ENCODE measurements at regions of chr12 and their contacts with region 1.

Region 1: GRCh38 chr12:63843721-63844390 is 644 bp upstream of the SRGAP1 start:
- DNase-seq: peak; percentile 74 to 81
- ATAC-seq: peak; percentile 88 to 90
- H3K4me3 ChIP-seq: peak overlapping the region; percentile 73 to 91 (median 84)
- H3K27ac ChIP-seq: peak overlapping the region; percentile 79 to 85 (median 83)
- H3K4me1 ChIP-seq: peaks cover 4 to 7% of the 10 kb centered on the region in 2 donors
- H3K27me3 ChIP-seq: no peaks in the 10 kb centered on the region
- CTCF ChIP-seq: peak; percentile 83 to 91 (median 88)
- POLR2A ChIP-seq: peak in 1 of 2 donors; percentile 55

Region 2: DNA sequence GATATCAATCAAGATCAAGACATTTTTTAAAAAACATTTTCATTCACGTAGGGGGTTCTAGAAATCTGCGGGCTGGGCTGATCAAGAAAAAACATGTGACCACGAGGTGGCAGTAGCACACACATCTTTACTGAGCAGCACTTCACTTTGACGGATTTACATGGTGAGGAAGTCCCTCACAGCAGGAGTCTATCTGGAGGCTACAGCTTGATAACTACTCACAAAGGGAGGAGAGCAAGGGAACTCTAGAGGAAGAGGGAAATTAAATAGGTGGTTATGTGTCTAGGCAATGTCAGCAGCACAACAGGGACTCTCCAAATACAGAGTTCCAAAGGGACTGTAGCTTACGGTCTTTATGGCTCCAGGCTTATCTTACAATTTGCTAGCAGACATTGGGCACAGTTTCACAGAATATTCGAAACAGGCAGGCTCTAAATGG is 423.6 kb before region 1 on chr12:
- in situ Hi-C with region 1: no loop called
- intact Hi-C with region 1: no loop called
- DNase-seq: no peak
- ATAC-seq: no peak
- H3K4me3 ChIP-seq: no peak overlapping the region
- H3K27ac ChIP-seq: no peak overlapping the region
- H3K4me1 ChIP-seq: no peaks in the 10 kb centered on the region
- H3K27me3 ChIP-seq: no peaks in the 10 kb centered on the region
- CTCF ChIP-seq: no peak
- POLR2A ChIP-seq: no peak

Region 3: DNA sequence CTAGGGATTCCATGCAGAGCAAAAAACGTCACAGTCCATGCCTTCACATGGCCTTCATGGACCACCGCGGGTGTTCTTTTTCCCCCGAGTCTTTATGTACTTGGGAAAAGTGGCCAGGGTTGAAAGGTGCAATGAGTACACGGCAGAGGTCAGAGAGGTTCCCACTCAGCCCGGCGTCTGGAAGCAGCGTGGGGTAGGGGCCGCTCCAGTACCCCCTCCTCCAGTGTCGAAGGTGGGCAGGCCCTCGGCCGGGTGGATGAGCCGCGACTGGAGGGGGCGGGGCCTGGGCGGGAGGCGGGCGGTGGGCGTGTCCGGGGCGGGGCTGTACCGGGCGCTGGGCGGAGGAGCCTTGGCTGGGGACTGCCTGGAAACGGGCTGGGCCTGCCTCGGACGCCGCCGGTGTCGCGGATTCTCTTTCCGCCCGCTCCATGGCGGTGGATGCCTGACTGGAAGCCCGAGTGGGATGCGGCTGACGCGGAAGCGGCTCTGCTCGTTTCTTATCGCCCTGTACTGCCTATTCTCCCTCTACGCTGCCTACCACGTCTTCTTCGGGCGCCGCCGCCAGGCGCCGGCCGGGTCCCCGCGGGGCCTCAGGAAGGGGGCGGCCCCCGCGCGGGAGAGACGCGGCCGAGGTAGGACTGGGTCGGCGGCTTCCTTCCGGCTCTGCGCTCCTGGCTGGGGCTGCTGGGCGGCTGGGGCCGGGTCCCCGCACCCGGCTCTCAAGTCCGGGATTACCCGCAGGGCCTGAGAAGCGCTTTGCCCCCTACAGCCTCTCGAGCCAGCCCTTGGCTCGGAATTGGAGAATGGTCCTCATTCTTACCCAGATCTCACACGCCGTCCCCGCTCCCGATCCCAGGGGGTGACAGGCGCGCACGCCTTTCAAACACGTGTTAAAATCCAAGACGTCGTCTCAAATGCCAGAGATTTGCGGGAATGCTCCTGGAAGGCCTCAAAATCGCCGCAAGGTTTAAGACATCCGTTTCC is 64.1 kb before region 1 on chr12 and contains the start of gene RXYLT1:
- in situ Hi-C with region 1: no loop called
- intact Hi-C with region 1: loop called (anchors 5 kb)
- DNase-seq: peak; percentile 74 to 76
- ATAC-seq: peak; percentile 95 to 97
- H3K4me3 ChIP-seq: peak within 1 kb of the TSS; percentile 66 to 78 (median 76)
- H3K27ac ChIP-seq: peak within 1 kb of the TSS; percentile 78 to 89 (median 82)
- H3K4me1 ChIP-seq: peaks cover 11 to 13% of the 10 kb centered on the region in 2 donors
- H3K27me3 ChIP-seq: no peaks in the 10 kb centered on the region
- CTCF ChIP-seq: peak in 1 of 5 experiments; percentile 26
- POLR2A ChIP-seq: peak; percentile 53 to 56
- total RNA-seq, gene RXYLT1: 9.4 to 16.5 (median 14.1) TPM

Region 4: DNA sequence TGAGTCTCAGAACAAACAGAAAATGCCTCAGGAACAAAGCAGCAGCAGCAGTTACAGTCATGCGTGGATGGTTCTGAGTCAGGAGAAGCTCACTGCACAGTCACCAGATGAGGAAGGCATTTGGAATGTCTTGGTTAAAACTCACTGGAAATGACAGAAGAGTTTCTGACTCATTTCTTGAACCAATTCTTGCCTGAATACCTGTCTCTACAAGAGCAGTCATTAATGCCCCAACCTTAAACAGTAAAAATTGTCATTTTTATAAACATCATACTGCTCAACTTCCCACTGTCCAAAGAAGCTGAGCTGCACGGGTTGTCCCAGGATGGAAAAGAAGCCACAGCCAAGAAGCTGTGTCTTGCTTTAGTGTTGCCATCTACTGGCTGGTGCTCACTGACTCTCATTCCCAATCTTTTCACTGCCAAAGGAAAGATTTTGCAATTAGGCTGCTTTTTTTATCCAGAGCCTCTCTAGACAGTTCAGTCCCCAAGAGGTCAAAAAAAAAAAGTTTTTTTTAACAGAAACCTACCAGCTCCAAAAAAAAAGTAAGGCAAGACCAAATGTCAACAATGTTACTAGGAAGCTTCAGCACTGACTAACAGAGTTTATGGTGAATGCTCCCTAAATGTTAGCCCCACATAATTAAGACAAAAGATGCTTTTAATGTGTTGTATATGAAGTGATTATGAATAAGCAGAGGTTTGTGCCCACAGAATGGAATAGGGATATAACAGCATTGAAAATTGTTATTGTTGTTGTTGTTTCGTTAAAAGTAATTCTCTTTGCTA is 337.8 kb after region 1 on chr12:
- in situ Hi-C with region 1: loop called in 2 of 4 experiments (anchors 5 to 10 kb)
- intact Hi-C with region 1: loop called (anchors 1 kb)
- DNase-seq: peak; percentile 33
- ATAC-seq: peak; percentile 88
- H3K4me3 ChIP-seq: no peak overlapping the region
- H3K27ac ChIP-seq: peak overlapping the region in 1 of 4 donors; percentile 30
- H3K4me1 ChIP-seq: peaks cover 0 to 16% of the 10 kb centered on the region in 2 donors
- H3K27me3 ChIP-seq: no peaks in the 10 kb centered on the region
- CTCF ChIP-seq: peak in 4 of 5 experiments; percentile 33 to 63 (median 48)
- POLR2A ChIP-seq: no peak

Region 5: GRCh38 chr12:64392221-64392620 is 548.4 kb after region 1 on chr12:
- in situ Hi-C with region 1: loop called in 1 of 4 experiments (anchors 25 kb)
- intact Hi-C with region 1: no loop called
- DNase-seq: no peak
- ATAC-seq: no peak
- H3K4me3 ChIP-seq: no peak overlapping the region
- H3K27ac ChIP-seq: no peak overlapping the region
- H3K4me1 ChIP-seq: no peaks in the 10 kb centered on the region
- H3K27me3 ChIP-seq: peaks cover 14 to 32% (median 22%) of the 10 kb centered on the region in 3 donors
- CTCF ChIP-seq: no peak
- POLR2A ChIP-seq: no peak

Region 6: DNA sequence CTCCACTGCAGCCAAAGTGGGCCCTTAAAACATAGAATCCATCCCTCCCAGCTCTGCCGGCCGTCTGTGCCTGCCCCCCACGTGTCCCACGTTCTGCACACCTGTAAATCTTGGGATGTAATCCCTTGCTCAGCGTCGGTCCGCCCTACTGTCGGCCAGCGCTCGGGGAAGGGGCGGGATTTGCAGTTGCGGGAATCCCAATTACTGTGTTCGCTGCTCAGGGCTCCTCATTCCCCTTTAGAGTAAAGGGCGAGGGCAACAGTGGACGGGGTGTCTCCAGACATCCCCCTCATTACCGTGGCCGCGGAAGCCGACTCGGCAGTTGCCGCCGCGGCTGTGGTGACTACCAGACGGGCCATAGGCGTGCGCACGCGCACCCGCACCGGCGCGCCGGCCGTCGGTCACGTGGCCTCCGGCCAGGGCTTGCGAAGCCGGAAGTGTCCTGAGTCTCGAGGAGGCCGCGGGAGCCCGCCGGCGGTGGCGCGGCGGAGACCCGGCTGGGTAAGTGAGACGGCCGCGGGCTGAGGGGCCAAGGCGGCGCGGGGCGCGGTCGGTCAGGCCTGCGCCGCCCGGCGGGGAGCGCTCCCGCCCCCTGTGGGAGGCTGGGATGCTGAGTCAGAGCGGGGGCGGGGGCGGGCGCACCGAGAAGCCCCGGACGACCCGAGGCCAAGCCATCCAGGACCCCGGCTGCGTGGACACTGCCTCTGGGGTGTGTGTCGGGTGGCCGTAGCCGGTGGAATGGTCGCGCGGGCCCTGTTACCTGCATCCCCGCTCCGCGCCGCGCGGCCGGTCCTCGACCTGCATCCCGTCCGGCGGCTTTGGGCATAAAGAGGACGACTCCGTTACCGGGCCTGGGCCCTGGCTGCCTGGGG is 608.1 kb after region 1 on chr12 and contains the start of gene TBK1:
- in situ Hi-C with region 1: no loop called
- intact Hi-C with region 1: loop called (anchors 5 kb)
- DNase-seq: peak; percentile 77 to 91
- ATAC-seq: peak; percentile 97 to 98
- H3K4me3 ChIP-seq: peak within 1 kb of the TSS; percentile 80 to 99 (median 90)
- H3K27ac ChIP-seq: peak within 1 kb of the TSS; percentile 89 to 99 (median 95)
- H3K4me1 ChIP-seq: peaks cover 12 to 16% of the 10 kb centered on the region in 2 donors
- H3K27me3 ChIP-seq: no peaks in the 10 kb centered on the region
- CTCF ChIP-seq: peak in 4 of 5 experiments; percentile 9 to 34 (median 20)
- POLR2A ChIP-seq: peak; percentile 90 to 94
- total RNA-seq, gene TBK1: 20.1 to 40.8 (median 27.6) TPM